ENCODE measurements at regions of chr7 and their contacts with region 1.

Region 1: DNA sequence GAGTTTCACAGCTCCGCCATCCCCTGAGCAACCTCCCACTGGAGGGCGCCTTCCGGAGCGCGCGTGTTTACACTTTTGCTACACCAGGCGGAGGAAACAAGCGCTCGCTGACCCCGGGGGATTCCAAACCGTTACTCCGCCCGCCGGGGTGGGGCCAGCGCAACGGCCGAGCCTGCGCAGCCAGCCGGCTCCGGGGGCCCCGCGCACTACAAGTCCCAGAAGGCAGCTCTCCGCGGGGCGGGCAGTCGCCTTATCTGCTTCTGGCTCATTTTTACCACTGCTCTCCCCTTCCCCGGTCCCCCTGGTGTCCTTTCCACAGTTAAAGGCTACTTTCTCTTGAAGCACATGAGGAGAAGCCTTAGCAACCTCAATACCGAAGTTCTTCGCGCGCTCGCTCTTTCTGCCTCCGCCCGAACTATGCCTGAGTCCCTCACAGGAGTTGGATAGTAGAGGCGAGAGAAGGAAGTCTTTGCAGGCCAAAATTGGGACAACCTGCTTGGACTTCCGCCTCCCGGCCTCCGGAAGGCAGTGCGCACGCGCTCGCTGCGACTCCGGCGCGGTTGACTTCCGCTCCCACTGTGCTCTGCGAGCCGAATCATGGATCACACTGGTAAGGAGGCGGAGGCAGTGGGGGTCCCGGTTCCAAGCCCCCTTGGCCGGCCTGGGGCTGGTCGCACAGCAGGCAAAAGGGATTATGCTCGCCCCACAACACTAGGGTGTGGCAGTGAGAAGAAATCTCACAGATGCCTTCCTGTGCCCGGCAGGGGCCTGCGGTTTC is at the start of gene CBLL1:
- DNase-seq: peak; percentile 97 to 98
- ATAC-seq: peak; percentile 88 to 97 (median 90)
- H3K4me3 ChIP-seq: peak within 1 kb of the TSS; percentile 81
- H3K4me3 Mint-ChIP-seq: peak within 1 kb of the TSS; percentile 96
- H3K27ac ChIP-seq: peak within 1 kb of the TSS; percentile 99
- H3K27ac Mint-ChIP-seq: peak within 1 kb of the TSS; percentile 100
- H3K4me1 ChIP-seq: peaks cover 15% of the 10 kb centered on the region
- H3K4me1 Mint-ChIP-seq: peaks cover 42 to 48% of the 10 kb centered on the region in 2 donors
- H3K27me3 ChIP-seq: no peaks in the 10 kb centered on the region
- H3K27me3 Mint-ChIP-seq: no peaks in the 10 kb centered on the region
- CTCF ChIP-seq: peak; percentile 65
- total RNA-seq, gene CBLL1: 62.7 to 85.8 (median 82.0) TPM

Region 2: GRCh38 chr7:106865130-106866041 is 878.4 kb before region 1 on chr7 and contains the start of gene PIK3CG:
- intact Hi-C with region 1: loop called (anchors 10 kb)
- DNase-seq: peak in 1 of 2 donors; percentile 78
- ATAC-seq: peak; percentile 85 to 94 (median 94)
- H3K4me3 ChIP-seq: peak within 1 kb of the TSS; percentile 89
- H3K4me3 Mint-ChIP-seq: peak within 1 kb of the TSS; percentile 94
- H3K27ac ChIP-seq: peak within 1 kb of the TSS; percentile 93
- H3K27ac Mint-ChIP-seq: peak within 1 kb of the TSS; percentile 92 to 97
- H3K4me1 ChIP-seq: peaks cover 43% of the 10 kb centered on the region
- H3K4me1 Mint-ChIP-seq: peaks cover 88 to 91% of the 10 kb centered on the region in 2 donors
- H3K27me3 ChIP-seq: no peaks in the 10 kb centered on the region
- H3K27me3 Mint-ChIP-seq: no peaks in the 10 kb centered on the region
- CTCF ChIP-seq: no peak
- total RNA-seq, gene PIK3CG: 64.9 to 83.3 (median 78.2) TPM

Region 3: DNA sequence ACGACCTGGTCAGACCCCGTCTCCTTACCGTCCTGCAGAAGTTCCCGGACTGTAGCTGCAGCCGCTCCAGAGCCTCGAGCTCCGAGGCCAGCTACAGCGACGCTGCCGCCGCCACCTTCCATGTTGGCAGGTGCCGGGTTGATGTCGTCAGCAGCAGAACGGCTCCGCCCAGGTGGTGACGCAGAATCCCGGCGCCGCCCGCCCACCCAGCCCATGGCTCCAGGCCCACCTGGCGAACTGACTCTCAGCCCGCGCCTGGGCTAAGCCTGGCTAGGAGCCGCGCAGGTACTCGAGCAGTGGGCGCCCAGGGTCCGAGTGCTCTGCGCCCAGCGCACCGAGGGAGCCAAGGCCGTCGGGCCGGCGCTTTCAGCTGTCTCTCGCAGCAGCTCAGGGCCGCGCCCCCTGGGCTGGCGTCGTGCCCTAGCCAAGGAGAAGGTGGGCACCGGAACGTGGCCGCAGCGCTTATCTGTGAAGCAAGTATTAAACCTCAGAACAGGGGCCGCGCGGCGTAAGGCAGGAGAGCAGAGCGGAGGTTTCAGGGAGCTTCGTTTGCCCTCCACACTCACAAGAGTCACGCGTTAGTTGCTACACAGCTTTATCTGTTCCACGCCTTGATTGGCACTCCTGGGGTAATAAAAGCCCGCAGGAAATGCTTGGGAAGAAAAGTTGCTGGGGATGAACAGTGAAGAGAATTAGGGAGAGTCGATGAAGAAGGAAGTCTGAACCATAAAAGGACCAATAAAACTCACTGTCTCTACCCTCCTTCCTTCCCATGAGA is 179.8 kb before region 1 on chr7 and contains the starts of genes COG5 and DUS4L:
- intact Hi-C with region 1: loop called (anchors 2 kb)
- DNase-seq: peak; percentile 85 to 94
- ATAC-seq: peak; percentile 91 to 94 (median 93)
- H3K4me3 ChIP-seq: peak within 1 kb of the TSS; percentile 100
- H3K4me3 Mint-ChIP-seq: peak within 1 kb of the TSS; percentile 95
- H3K27ac ChIP-seq: peak within 1 kb of the TSS; percentile 98
- H3K27ac Mint-ChIP-seq: peak within 1 kb of the TSS; percentile 84 to 87
- H3K4me1 ChIP-seq: peaks cover 12% of the 10 kb centered on the region
- H3K4me1 Mint-ChIP-seq: peaks cover 49 to 54% of the 10 kb centered on the region in 2 donors
- H3K27me3 ChIP-seq: no peaks in the 10 kb centered on the region
- H3K27me3 Mint-ChIP-seq: no peaks in the 10 kb centered on the region
- CTCF ChIP-seq: no peak
- total RNA-seq, gene COG5: 49.2 to 54.6 (median 54.2) TPM
- total RNA-seq, gene DUS4L: 5.5 to 10.5 (median 9.1) TPM

Region 4: GRCh38 chr7:107785926-107786325 is 42.2 kb after region 1 on chr7:
- intact Hi-C with region 1: no loop called
- DNase-seq: no peak
- ATAC-seq: no peak
- H3K4me3 ChIP-seq: no peak overlapping the region
- H3K4me3 Mint-ChIP-seq: no peak overlapping the region
- H3K27ac ChIP-seq: no peak overlapping the region
- H3K27ac Mint-ChIP-seq: no peak overlapping the region
- H3K4me1 ChIP-seq: no peaks in the 10 kb centered on the region
- H3K4me1 Mint-ChIP-seq: no peaks in the 10 kb centered on the region
- H3K27me3 ChIP-seq: no peaks in the 10 kb centered on the region
- H3K27me3 Mint-ChIP-seq: peaks cover 0 to 9% of the 10 kb centered on the region in 2 donors
- CTCF ChIP-seq: no peak

Region 5: DNA sequence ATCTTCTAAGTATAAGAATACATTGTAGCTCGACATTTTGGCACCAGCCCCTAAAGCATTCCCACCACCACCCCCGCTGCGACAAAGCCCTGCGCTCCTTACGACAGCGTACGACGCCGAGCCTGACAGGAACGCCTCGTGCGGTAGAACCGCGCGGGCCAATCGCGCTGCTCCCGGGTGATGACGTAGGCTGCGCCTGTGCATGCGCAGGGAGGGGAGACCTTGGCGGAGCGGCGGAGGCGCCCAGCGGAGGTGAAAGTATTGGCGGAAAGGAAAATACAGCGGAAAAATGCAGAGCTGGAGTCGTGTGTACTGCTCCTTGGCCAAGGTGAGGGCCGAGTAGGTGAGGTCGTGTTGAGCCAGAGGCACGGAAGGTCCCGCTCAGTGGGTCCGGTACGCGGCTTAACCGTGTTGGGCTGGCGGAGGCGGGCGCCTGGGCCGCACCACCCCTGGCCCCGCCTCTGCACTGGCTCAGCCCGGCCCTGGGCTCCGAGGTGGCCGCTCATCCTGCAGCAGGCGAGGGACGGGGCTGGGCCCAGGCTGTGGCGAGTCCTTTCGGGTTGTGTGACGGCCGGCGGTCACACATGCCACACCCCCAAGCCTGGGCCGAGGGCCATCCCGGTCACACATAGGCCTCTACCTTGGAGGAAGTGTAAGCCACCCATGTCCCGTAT is 147.3 kb after region 1 on chr7 and contains the start of gene DLD:
- intact Hi-C with region 1: loop called (anchors 1 kb)
- DNase-seq: peak; percentile 94 to 97
- ATAC-seq: peak; percentile 91 to 97 (median 94)
- H3K4me3 ChIP-seq: peak within 1 kb of the TSS; percentile 75
- H3K4me3 Mint-ChIP-seq: peak within 1 kb of the TSS; percentile 97
- H3K27ac ChIP-seq: peak within 1 kb of the TSS; percentile 95
- H3K27ac Mint-ChIP-seq: peak within 1 kb of the TSS; percentile 97 to 98
- H3K4me1 ChIP-seq: peaks cover 15% of the 10 kb centered on the region
- H3K4me1 Mint-ChIP-seq: peaks cover 44 to 50% of the 10 kb centered on the region in 2 donors
- H3K27me3 ChIP-seq: no peaks in the 10 kb centered on the region
- H3K27me3 Mint-ChIP-seq: no peaks in the 10 kb centered on the region
- CTCF ChIP-seq: no peak
- total RNA-seq, gene DLD: 72.2 to 81.4 (median 80.9) TPM

Region 6: GRCh38 chr7:108569381-108570145 is 825.8 kb after region 1 on chr7 and contains the starts of genes DNAJB9 and THAP5:
- intact Hi-C with region 1: loop called (anchors 2 kb)
- DNase-seq: peak; percentile 98 to 100
- ATAC-seq: peak; percentile 87 to 96 (median 88)
- H3K4me3 ChIP-seq: peak within 1 kb of the TSS; percentile 87
- H3K4me3 Mint-ChIP-seq: peak within 1 kb of the TSS; percentile 94
- H3K27ac ChIP-seq: peak within 1 kb of the TSS; percentile 97
- H3K27ac Mint-ChIP-seq: peak within 1 kb of the TSS; percentile 98 to 100
- H3K4me1 ChIP-seq: peaks cover 17% of the 10 kb centered on the region
- H3K4me1 Mint-ChIP-seq: peaks cover 47 to 56% of the 10 kb centered on the region in 2 donors
- H3K27me3 ChIP-seq: no peaks in the 10 kb centered on the region
- H3K27me3 Mint-ChIP-seq: no peaks in the 10 kb centered on the region
- CTCF ChIP-seq: no peak
- total RNA-seq, gene DNAJB9: 33.9 to 44.5 (median 43.1) TPM
- total RNA-seq, gene THAP5: 13.8 to 21.0 (median 19.1) TPM